ENCODE measurements at regions of chr12 and their contacts with region 1.

Region 1: GRCh38 chr12:68279227-68280054 is 26.0 kb upstream of the IL22 start:
- DNase-seq: no peak
- H3K4me3 Mint-ChIP-seq: no peak overlapping the region
- H3K27ac Mint-ChIP-seq: no peak overlapping the region
- H3K4me1 Mint-ChIP-seq: peaks cover 24% of the 10 kb centered on the region
- H3K27me3 Mint-ChIP-seq: peaks cover 22% of the 10 kb centered on the region

Region 2: GRCh38 chr12:68236421-68237059 is 42.9 kb before region 1 on chr12:
- CTCF ChIA-PET with region 1: interaction called, 3 read pairs
- intact Hi-C with region 1: loop called (anchors 1 kb)
- DNase-seq: peak; percentile 43
- H3K4me3 Mint-ChIP-seq: peak overlapping the region; percentile 75
- H3K27ac Mint-ChIP-seq: peak overlapping the region; percentile 57
- H3K4me1 Mint-ChIP-seq: peaks cover 48% of the 10 kb centered on the region
- H3K27me3 Mint-ChIP-seq: no peaks in the 10 kb centered on the region

Region 3: GRCh38 chr12:68267892-68268396 is 11.5 kb before region 1 on chr12:
- CTCF ChIA-PET with region 1: no interaction called
- intact Hi-C with region 1: loop called (anchors 1 kb)
- DNase-seq: peak; percentile 16
- H3K4me3 Mint-ChIP-seq: no peak overlapping the region
- H3K27ac Mint-ChIP-seq: no peak overlapping the region
- H3K4me1 Mint-ChIP-seq: peaks cover 12% of the 10 kb centered on the region
- H3K27me3 Mint-ChIP-seq: peaks cover 41% of the 10 kb centered on the region

Region 4: DNA sequence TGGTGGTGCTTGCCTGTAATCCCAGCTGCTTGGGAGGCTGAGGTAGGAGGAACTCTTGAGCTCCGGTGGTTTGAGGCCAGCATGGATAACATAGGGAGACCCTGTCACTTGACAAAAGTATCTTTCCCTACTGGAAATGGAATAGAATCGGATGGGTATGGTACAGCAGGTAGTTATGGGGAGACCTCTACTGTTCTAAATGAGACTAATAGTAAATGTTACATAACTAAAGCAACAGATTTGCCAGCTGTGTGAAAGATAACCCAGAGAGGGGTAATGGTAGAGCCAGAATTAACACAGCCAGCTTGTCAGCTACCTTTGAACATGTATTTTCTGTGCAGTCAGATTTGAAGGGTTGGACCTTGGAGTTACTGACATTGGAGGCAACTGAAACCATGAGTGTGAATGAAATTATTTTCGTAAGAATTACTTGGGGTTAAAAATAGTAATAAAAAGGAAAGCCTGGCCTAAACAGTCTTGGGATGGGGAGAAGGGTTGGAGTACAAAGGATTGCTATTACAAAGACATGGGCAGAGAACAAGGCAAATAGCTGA is 385.7 kb after region 1 on chr12:
- CTCF ChIA-PET with region 1: no interaction called
- intact Hi-C with region 1: no loop called
- DNase-seq: no peak
- H3K4me3 Mint-ChIP-seq: no peak overlapping the region
- H3K27ac Mint-ChIP-seq: no peak overlapping the region
- H3K4me1 Mint-ChIP-seq: peaks cover 30% of the 10 kb centered on the region
- H3K27me3 Mint-ChIP-seq: no peaks in the 10 kb centered on the region

Measured in activated naive CD4-positive, alpha-beta T cell treated with anti-CD3 and anti-CD28 coated beads for 36 hours (primary cell).